SK-MEL-5 (cell line): ENCODE measurements at regions of chr20 and their contacts with region 1.

Region 1: GRCh38 chr20:16761305-16761829 is 13.2 kb downstream of the OTOR start:
- DNase-seq: peak; percentile 89

Region 2: DNA sequence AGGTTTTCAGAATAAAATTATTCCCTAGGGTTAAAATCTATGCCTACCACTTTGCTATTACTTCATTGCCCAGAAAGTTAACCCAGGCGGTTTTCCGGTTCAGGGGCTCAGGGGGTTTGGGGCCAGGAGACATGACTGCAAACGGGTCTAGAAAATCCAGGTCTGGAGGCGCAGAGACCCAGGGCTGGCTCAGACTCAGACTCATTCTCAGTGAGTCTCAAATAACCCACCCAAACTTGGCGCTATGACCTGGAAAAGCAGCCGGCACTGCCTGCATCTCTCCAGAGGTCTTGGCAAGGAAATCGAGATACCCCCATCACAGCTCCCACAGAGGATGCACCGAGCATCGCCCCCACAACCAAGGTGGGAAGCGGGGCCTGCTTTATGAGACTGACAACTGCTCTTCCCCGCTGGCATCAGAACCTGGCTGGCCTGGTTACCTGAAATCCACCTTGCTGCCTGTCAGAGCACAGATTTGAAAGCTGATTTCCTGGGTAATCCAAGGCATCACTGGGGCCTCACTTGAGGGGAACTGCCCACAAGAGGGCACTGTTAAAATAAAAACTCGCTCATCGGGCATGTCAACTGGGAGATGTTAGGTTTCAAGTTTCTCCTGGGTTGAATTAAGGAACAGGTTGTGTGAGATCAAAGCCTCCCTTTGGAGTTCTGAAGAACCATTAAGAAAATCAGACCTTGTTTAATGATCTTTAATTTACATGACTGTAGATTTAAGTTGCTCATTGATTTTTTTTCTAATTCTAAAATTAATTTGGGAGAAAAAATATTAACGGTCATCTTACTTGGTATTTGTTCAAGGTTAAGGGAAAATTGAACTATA is 243.2 kb before region 1 on chr20:
- in situ Hi-C with region 1: loop called (anchors 25 kb)
- DNase-seq: peak; percentile 78

Region 3: GRCh38 chr20:16947479-16947878 is 186.1 kb after region 1 on chr20:
- in situ Hi-C with region 1: no loop called
- DNase-seq: peak; percentile 59

Region 4: GRCh38 chr20:16984481-16984880 is 223.1 kb after region 1 on chr20:
- in situ Hi-C with region 1: no loop called
- DNase-seq: no peak

Region 5: DNA sequence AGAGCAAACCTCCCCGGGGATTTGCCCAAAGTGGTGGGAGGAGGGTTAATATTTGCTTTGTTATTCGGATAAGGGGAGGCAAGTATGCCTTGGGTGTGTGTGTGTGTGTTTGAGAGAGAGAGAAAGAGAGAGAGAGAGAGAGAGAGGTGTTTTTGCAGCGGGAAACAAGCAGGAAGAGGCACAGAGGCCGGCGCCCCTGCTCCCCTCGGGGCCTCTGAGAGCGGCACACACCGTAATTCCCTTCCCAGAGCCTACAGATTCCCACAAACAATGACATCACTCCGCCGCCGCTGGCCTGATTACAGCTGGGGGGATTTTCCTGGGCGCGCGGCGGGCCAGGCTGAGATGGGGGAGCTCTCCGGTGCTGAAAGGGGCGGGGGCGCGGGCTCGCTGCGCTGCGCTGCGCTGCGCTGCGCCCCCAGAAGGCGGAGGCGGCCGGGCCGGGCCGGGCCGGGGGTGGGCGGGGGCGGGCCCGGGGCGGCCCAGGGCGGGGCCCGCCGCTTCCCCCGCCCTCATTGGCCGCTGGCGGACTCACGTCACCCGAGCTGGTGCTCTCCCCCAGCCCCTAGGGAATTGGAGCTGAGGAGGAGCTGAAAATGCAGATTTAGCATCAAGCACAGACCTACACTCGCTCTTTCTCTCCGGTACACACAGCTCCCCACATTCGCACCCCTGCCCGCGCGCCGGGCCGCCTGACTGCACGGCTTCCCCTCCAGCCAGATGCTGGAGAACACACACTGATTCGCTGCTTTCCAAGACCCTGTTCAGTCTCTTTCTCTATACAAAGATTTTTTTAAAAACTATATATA is 465.2 kb after region 1 on chr20 and contains the start of gene PCSK2:
- in situ Hi-C with region 1: no loop called
- DNase-seq: peak; percentile 80
- total RNA-seq, gene PCSK2: 0.63 TPM in 1 of 2 replicates, not detected in the other

Region 6: GRCh38 chr20:17343656-17344452 is 582.5 kb after region 1 on chr20:
- in situ Hi-C with region 1: no loop called
- DNase-seq: no peak